ENCODE measurements at regions of chr14 and their contacts with region 1.

Region 1: GRCh38 chr14:66932793-66933108 is 256.5 kb upstream of the GARIN2 start:
- DNase-seq: no peak
- H3K4me3 ChIP-seq: no peak overlapping the region
- H3K4me3 Mint-ChIP-seq: no peak overlapping the region
- H3K27ac Mint-ChIP-seq: peak overlapping the region; percentile 63
- H3K4me1 ChIP-seq: peaks cover 17% of the 10 kb centered on the region
- H3K4me1 Mint-ChIP-seq: peaks cover 13% of the 10 kb centered on the region
- H3K27me3 ChIP-seq: no peaks in the 10 kb centered on the region
- H3K27me3 Mint-ChIP-seq: no peaks in the 10 kb centered on the region
- CTCF ChIP-seq: no peak

Region 2: GRCh38 chr14:66944872-66945271 is 12.1 kb after region 1 on chr14:
- CTCF ChIA-PET with region 1: no interaction called
- POLR2A ChIA-PET with region 1: no interaction called
- intact Hi-C with region 1: no loop called
- DNase-seq: peak in 1 of 2 experiments; percentile 47
- H3K4me3 ChIP-seq: no peak overlapping the region
- H3K4me3 Mint-ChIP-seq: no peak overlapping the region
- H3K27ac Mint-ChIP-seq: no peak overlapping the region
- H3K4me1 ChIP-seq: no peaks in the 10 kb centered on the region
- H3K4me1 Mint-ChIP-seq: no peaks in the 10 kb centered on the region
- H3K27me3 ChIP-seq: no peaks in the 10 kb centered on the region
- H3K27me3 Mint-ChIP-seq: no peaks in the 10 kb centered on the region
- CTCF ChIP-seq: no peak

Region 3: GRCh38 chr14:67111022-67111421 is 178.3 kb after region 1 on chr14:
- CTCF ChIA-PET with region 1: no interaction called
- POLR2A ChIA-PET with region 1: no interaction called
- intact Hi-C with region 1: loop called (anchors 5 kb)
- DNase-seq: no peak
- H3K4me3 ChIP-seq: no peak overlapping the region
- H3K4me3 Mint-ChIP-seq: no peak overlapping the region
- H3K27ac Mint-ChIP-seq: no peak overlapping the region
- H3K4me1 ChIP-seq: no peaks in the 10 kb centered on the region
- H3K4me1 Mint-ChIP-seq: no peaks in the 10 kb centered on the region
- H3K27me3 ChIP-seq: no peaks in the 10 kb centered on the region
- H3K27me3 Mint-ChIP-seq: peaks cover 1% of the 10 kb centered on the region
- CTCF ChIP-seq: no peak